ENCODE measurements at regions of chr12 and their contacts with region 1.

Region 1: DNA sequence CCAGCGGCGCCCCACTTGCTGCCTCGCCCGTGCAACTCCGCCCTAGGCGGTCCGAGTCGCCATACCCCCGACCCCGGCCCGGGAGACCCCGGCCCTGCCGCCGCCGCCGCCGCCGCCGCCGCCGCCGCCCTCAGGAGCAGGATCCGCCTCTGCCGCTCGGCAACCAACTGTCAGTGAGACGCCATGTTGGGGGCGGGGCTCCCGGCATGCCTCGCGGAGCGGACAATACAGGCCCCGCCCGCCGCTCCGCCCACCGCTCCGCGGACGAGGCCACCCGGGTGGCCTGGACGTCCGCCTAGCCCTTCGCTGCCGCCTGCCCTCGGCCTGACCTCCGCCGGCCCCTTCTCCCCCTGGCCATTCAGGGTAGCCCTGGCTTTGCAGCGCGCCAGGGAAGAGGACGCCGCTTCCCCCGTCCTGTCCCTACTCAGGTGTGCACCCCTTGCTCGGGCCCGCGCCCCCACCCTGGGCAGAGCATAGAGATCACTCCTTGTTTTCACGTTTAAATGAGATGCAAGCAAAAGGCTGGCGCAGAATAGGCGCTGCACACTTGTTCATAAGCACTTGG is at the start of gene HECTD4:
- DNase-seq: peak; percentile 92 to 99 (median 97)
- ATAC-seq: peak; percentile 97 to 99 (median 99)
- H3K4me3 ChIP-seq: peak within 1 kb of the TSS; percentile 89 to 99 (median 96)
- H3K27ac ChIP-seq: peak within 1 kb of the TSS; percentile 71 to 86 (median 79)
- H3K4me1 ChIP-seq: no peaks in the 10 kb centered on the region
- H3K27me3 ChIP-seq: no peaks in the 10 kb centered on the region
- CTCF ChIP-seq: no peak
- total RNA-seq, gene HECTD4: 17.9 to 36.1 (median 23.7) TPM

Region 2: GRCh38 chr12:112198120-112198733 is 184.1 kb before region 1 on chr12:
- intact Hi-C with region 1: loop called in 1 of 3 experiments (anchors 10 kb)
- DNase-seq: peak in 2 of 6 donors; percentile 33 to 43
- ATAC-seq: peak; percentile 53 to 90 (median 89)
- H3K4me3 ChIP-seq: no peak overlapping the region
- H3K27ac ChIP-seq: no peak overlapping the region
- H3K4me1 ChIP-seq: no peaks in the 10 kb centered on the region
- H3K27me3 ChIP-seq: no peaks in the 10 kb centered on the region
- CTCF ChIP-seq: peak in 2 of 4 donors; percentile 33 to 37

Region 3: GRCh38 chr12:112496496-112496895 is 114.2 kb after region 1 on chr12:
- intact Hi-C with region 1: no loop called
- DNase-seq: no peak
- ATAC-seq: no peak
- H3K4me3 ChIP-seq: no peak overlapping the region
- H3K27ac ChIP-seq: no peak overlapping the region
- H3K4me1 ChIP-seq: no peaks in the 10 kb centered on the region
- H3K27me3 ChIP-seq: no peaks in the 10 kb centered on the region
- CTCF ChIP-seq: no peak

Measured in pancreas (tissue), 10 donors.